ENCODE measurements at regions of chr2 and their contacts with region 1.

Region 1: GRCh38 chr2:217510771-217511291 is 492.0 kb downstream of the TNS1 start:
- DNase-seq: no peak
- H3K4me3 ChIP-seq: peak overlapping the region in 1 of 4 donors; percentile 4
- H3K27ac ChIP-seq: peak overlapping the region in 1 of 4 donors; percentile 17
- H3K4me1 ChIP-seq: peaks cover 0 to 22% (median 14%) of the 10 kb centered on the region in 4 donors
- H3K27me3 ChIP-seq: no peaks in the 10 kb centered on the region
- CTCF ChIP-seq: peak; percentile 72 to 86 (median 80)
- EP300 ChIP-seq: no peak
- POLR2A ChIP-seq: no peak

Region 2: GRCh38 chr2:216519154-216519762 is 991.6 kb before region 1 on chr2:
- intact Hi-C with region 1: loop called (anchors 10 kb)
- DNase-seq: no peak
- H3K4me3 ChIP-seq: no peak overlapping the region
- H3K27ac ChIP-seq: no peak overlapping the region
- H3K4me1 ChIP-seq: peaks cover 3 to 26% (median 12%) of the 10 kb centered on the region in 4 donors
- H3K27me3 ChIP-seq: no peaks in the 10 kb centered on the region
- CTCF ChIP-seq: peak; percentile 79 to 86 (median 85)
- EP300 ChIP-seq: no peak
- POLR2A ChIP-seq: no peak

Region 3: GRCh38 chr2:216687646-216688045 is 823.2 kb before region 1 on chr2:
- intact Hi-C with region 1: loop called (anchors 5 kb)
- DNase-seq: no peak
- H3K4me3 ChIP-seq: no peak overlapping the region
- H3K27ac ChIP-seq: peak overlapping the region; percentile 84 to 94 (median 88)
- H3K4me1 ChIP-seq: peaks cover 53 to 100% (median 96%) of the 10 kb centered on the region in 4 donors
- H3K27me3 ChIP-seq: peaks cover 0 to 3% (median 0%) of the 10 kb centered on the region in 4 donors
- CTCF ChIP-seq: peak; percentile 10 to 46 (median 16)
- EP300 ChIP-seq: no peak
- POLR2A ChIP-seq: no peak

Region 4: GRCh38 chr2:216698895-216699294 is 811.9 kb before region 1 on chr2:
- intact Hi-C with region 1: loop called (anchors 2 kb)
- DNase-seq: no peak
- H3K4me3 ChIP-seq: no peak overlapping the region
- H3K27ac ChIP-seq: peak overlapping the region; percentile 84 to 94 (median 88)
- H3K4me1 ChIP-seq: peaks cover 43 to 74% (median 71%) of the 10 kb centered on the region in 4 donors
- H3K27me3 ChIP-seq: peaks cover 0 to 6% (median 0%) of the 10 kb centered on the region in 4 donors
- CTCF ChIP-seq: peak; percentile 67 to 81 (median 68)
- EP300 ChIP-seq: no peak
- POLR2A ChIP-seq: no peak

Region 5: GRCh38 chr2:217090024-217090473 is 420.8 kb before region 1 on chr2:
- intact Hi-C with region 1: no loop called
- DNase-seq: peak; percentile 5
- H3K4me3 ChIP-seq: peak overlapping the region in 2 of 4 donors; percentile 15 to 33
- H3K27ac ChIP-seq: no peak overlapping the region
- H3K4me1 ChIP-seq: peaks cover 0 to 3% (median 0%) of the 10 kb centered on the region in 4 donors
- H3K27me3 ChIP-seq: no peaks in the 10 kb centered on the region
- CTCF ChIP-seq: no peak
- EP300 ChIP-seq: no peak
- POLR2A ChIP-seq: no peak

Region 6: GRCh38 chr2:217166241-217166850 is 344.5 kb before region 1 on chr2:
- intact Hi-C with region 1: loop called (anchors 10 kb)
- DNase-seq: peak; percentile 26
- H3K4me3 ChIP-seq: no peak overlapping the region
- H3K27ac ChIP-seq: no peak overlapping the region
- H3K4me1 ChIP-seq: peaks cover 0 to 13% (median 9%) of the 10 kb centered on the region in 4 donors
- H3K27me3 ChIP-seq: no peaks in the 10 kb centered on the region
- CTCF ChIP-seq: peak; percentile 40 to 61 (median 51)
- EP300 ChIP-seq: no peak
- POLR2A ChIP-seq: no peak

Region 7: GRCh38 chr2:217360781-217361482 is 149.9 kb before region 1 on chr2:
- intact Hi-C with region 1: loop called (anchors 10 kb)
- DNase-seq: peak; percentile 91
- H3K4me3 ChIP-seq: peak overlapping the region in 1 of 4 donors; percentile 1
- H3K27ac ChIP-seq: peak overlapping the region; percentile 82 to 86 (median 84)
- H3K4me1 ChIP-seq: peaks cover 37 to 98% (median 84%) of the 10 kb centered on the region in 4 donors
- H3K27me3 ChIP-seq: no peaks in the 10 kb centered on the region
- CTCF ChIP-seq: peak in 1 of 3 experiments; percentile 33
- EP300 ChIP-seq: no peak
- POLR2A ChIP-seq: no peak

Region 8: GRCh38 chr2:217713395-217714286 is 202.8 kb after region 1 on chr2:
- intact Hi-C with region 1: loop called (anchors 5 kb)
- DNase-seq: peak; percentile 96
- H3K4me3 ChIP-seq: no peak overlapping the region
- H3K27ac ChIP-seq: peak overlapping the region; percentile 67 to 75 (median 68)
- H3K4me1 ChIP-seq: peaks cover 15 to 57% (median 40%) of the 10 kb centered on the region in 4 donors
- H3K27me3 ChIP-seq: no peaks in the 10 kb centered on the region
- CTCF ChIP-seq: peak; percentile 95 to 99 (median 96)
- EP300 ChIP-seq: no peak
- POLR2A ChIP-seq: no peak